SK-N-SH (cell line): ENCODE measurements at regions of chr7 and their contacts with region 1.

Region 1: GRCh38 chr7:25069900-25070443 is 55.1 kb downstream of the CYCS start:
- DNase-seq: peak; percentile 83
- H3K4me3 ChIP-seq: peak overlapping the region in 1 of 2 experiments; percentile 30; a peak in 1 of 4 replicates
- H3K27ac ChIP-seq: no peak overlapping the region
- H3K4me1 ChIP-seq: no peaks in the 10 kb centered on the region
- H3K27me3 ChIP-seq: no peaks in the 10 kb centered on the region
- CTCF ChIP-seq: peak; percentile 99
- EP300 ChIP-seq: no peak
- RAD21 ChIP-seq: peak; percentile 93

Region 2: GRCh38 chr7:24825931-24826661 is 243.9 kb before region 1 on chr7:
- CTCF ChIA-PET with region 1: interaction called, 64 read pairs
- POLR2A ChIA-PET with region 1: no interaction called
- DNase-seq: no peak
- H3K4me3 ChIP-seq: no peak overlapping the region
- H3K27ac ChIP-seq: peak overlapping the region; percentile 72 to 95; a peak in 3 of 4 replicates
- H3K4me1 ChIP-seq: peaks cover 24 to 60% of the 10 kb centered on the region in 2 experiments
- H3K27me3 ChIP-seq: no peaks in the 10 kb centered on the region
- CTCF ChIP-seq: no peak
- EP300 ChIP-seq: peak in 1 of 2 experiments; percentile 35; a peak in 1 of 4 replicates
- RAD21 ChIP-seq: no peak

Region 3: DNA sequence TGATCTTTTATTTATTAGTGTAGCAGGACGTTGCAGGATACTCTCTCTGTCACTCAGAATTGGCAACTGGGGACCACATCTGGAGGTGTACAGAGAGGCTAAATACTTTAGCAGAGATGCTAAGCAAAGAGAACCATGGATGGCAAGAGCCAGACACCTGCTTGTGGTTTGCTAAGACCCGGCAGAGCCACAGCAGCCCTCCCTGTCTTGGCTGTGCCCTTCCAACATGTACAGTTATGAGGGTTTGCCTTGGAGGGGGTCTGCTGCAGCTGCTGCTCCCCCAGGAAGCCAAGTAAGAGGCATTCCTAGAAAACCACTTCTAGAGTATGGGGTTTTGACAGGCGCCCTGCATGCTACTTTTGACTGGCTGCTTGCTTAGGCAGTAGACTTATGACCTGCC is 153.2 kb after region 1 on chr7:
- CTCF ChIA-PET with region 1: no interaction called
- POLR2A ChIA-PET with region 1: no interaction called
- DNase-seq: no peak
- H3K4me3 ChIP-seq: no peak overlapping the region
- H3K27ac ChIP-seq: no peak overlapping the region
- H3K4me1 ChIP-seq: peaks cover 0 to 2% of the 10 kb centered on the region in 2 experiments; a peak in 1 of 4 replicates
- H3K27me3 ChIP-seq: peaks cover 13% of the 10 kb centered on the region; the same call in 1 of the 2 replicates
- CTCF ChIP-seq: no peak
- EP300 ChIP-seq: no peak
- RAD21 ChIP-seq: no peak